Sciatic nerve (tissue), 2 donors: ENCODE measurements at regions of chr2 and their contacts with region 1.

Region 1: GRCh38 chr2:173886613-173887012 is 78.6 kb downstream of the SP3 start:
- DNase-seq: no peak
- ATAC-seq: no peak

Region 2: DNA sequence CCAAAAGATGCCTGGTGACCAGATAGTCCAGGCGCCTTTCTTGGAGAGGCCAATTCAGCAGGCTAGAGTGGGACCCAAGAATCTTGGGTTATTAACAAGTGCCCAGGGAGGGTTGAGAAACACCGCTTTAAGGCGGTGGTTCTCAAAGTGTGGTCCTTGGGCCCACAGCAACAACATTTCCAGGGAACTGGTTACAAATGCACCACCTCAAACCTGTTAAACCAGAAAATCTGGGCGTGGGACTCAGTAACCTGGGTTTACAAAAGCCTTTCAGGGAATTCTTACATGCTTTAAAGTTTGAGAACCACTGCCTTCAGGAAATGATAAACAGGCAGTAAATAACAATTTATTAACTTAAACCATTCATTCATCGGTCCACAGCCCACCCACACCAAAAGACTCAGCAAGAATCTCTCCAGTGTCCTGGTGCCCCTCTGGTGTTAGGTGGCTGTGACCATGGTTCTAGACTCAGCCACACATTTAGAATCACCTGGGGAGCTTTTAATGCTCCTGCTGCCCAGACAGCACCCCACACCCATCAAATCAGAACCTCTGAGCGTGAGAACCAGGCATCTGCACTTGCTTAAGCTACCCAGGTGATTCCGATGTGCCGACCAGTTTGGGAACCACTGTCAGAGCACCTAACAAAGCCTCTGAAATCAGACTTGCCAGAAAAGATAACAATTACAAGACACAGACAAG is 13.8 kb before region 1 on chr2:
- intact Hi-C with region 1: loop called (anchors 1 kb)
- DNase-seq: no peak
- ATAC-seq: no peak